ENCODE measurements at regions of chr6 and their contacts with region 1.

Region 1: GRCh38 chr6:42928986-42929820 is at the start of gene CNPY3:
- DNase-seq: peak; percentile 94
- ATAC-seq: peak; percentile 86
- H3K4me3 Mint-ChIP-seq: peak within 1 kb of the TSS; percentile 96
- H3K27ac Mint-ChIP-seq: peak within 1 kb of the TSS; percentile 99
- H3K4me1 Mint-ChIP-seq: peaks cover 32% of the 10 kb centered on the region
- H3K27me3 Mint-ChIP-seq: no peaks in the 10 kb centered on the region
- total RNA-seq, gene CNPY3: 90.8 to 91.4 TPM

Region 2: DNA sequence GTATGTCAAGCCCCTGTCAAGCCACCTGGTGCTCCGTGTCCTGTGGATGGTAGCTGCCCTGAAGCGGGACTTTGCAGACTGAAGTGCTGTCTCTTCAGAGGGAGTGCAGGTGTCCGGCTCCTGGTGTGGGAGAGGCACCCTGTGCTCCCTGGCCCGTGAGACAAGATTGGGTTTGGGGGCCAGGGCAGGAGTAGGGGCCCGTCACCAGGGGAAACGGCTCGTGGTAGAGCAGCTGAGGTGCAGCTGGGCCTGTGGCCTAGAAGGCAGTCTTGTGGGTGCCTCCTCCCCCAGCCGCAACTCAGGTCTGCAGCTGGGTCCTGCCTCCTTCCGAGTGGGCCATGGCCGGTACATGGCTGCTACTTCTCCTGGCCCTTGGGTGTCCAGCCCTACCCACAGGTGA is 13.5 kb before region 1 on chr6 and contains the start of gene PTCRA:
- POLR2A ChIA-PET with region 1: interaction called, 15 read pairs
- DNase-seq: no peak
- ATAC-seq: peak; percentile 26
- H3K4me3 Mint-ChIP-seq: no peak within 1 kb of the TSS
- H3K27ac Mint-ChIP-seq: no peak within 1 kb of the TSS
- H3K4me1 Mint-ChIP-seq: peaks cover 3% of the 10 kb centered on the region
- H3K27me3 Mint-ChIP-seq: peaks cover 18% of the 10 kb centered on the region
- total RNA-seq, gene PTCRA: not detected

Region 3: DNA sequence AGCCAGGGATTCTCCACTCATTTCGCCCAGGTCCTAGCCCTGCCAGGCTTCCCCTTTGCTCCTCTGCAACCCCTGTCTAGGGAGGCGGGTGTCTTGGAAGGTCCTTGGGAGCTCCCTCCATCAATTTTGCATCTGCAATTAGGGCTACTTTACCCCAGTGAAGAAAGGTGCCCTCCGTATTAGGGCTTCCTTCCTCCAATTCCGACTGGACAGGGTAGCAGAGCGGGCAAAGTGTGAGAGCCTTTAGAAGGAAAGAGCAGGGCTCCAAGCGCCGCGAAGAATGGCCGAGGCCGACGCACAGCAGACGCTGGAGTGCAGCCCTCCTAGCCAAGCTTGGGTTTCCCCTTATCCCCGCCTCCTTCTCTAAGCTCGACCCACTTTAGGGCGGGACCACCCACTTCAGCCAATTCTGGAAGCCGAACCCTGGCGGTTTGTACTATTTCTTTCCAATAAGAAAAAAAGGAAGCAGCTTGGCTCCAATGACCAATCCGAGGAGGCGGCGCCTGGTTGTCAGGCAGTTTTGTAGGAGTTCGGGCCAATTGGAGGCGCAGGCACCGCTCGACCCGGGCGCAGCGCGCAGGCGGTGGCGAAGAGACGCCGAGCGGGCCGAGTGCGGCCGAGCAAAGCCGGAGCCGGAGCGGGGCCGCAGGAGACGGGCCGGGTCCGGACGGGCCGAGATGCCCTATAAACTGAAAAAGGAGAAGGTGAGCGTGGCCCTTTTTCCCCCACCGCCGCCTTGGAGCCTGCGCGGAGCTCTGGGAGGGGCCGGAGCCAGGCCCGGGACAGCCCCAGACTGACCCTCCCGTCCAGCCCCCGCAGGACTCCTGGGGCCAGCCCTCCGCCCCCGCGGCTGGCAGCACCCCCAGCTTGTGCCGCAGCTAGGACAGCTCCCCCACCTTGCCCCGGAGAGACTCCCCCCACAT is 55.1 kb after region 1 on chr6 and contains the start of gene PPP2R5D:
- POLR2A ChIA-PET with region 1: interaction called, 66 read pairs
- DNase-seq: peak; percentile 91
- ATAC-seq: peak; percentile 94
- H3K4me3 Mint-ChIP-seq: peak within 1 kb of the TSS; percentile 99
- H3K27ac Mint-ChIP-seq: peak within 1 kb of the TSS; percentile 92
- H3K4me1 Mint-ChIP-seq: peaks cover 51% of the 10 kb centered on the region
- H3K27me3 Mint-ChIP-seq: no peaks in the 10 kb centered on the region
- total RNA-seq, gene PPP2R5D: 54.7 to 58.8 TPM

Region 4: GRCh38 chr6:43021270-43022047 is 92.3 kb after region 1 on chr6 and contains the start of gene RRP36:
- POLR2A ChIA-PET with region 1: interaction called, 16 read pairs
- DNase-seq: peak; percentile 72
- ATAC-seq: peak; percentile 75
- H3K4me3 Mint-ChIP-seq: peak within 1 kb of the TSS; percentile 98
- H3K27ac Mint-ChIP-seq: peak within 1 kb of the TSS; percentile 93
- H3K4me1 Mint-ChIP-seq: peaks cover 19% of the 10 kb centered on the region
- H3K27me3 Mint-ChIP-seq: no peaks in the 10 kb centered on the region
- total RNA-seq, gene RRP36: 63.8 to 65.6 TPM

Measured in activated naive CD8-positive, alpha-beta T cell treated with anti-CD3 and anti-CD28 coated beads, Interleukin-2, amount 10 ng/mL, durations not matched to agents 7 days and 5 days (primary cell).